ENCODE measurements at regions of chr1 and their contacts with region 1.

Region 1: DNA sequence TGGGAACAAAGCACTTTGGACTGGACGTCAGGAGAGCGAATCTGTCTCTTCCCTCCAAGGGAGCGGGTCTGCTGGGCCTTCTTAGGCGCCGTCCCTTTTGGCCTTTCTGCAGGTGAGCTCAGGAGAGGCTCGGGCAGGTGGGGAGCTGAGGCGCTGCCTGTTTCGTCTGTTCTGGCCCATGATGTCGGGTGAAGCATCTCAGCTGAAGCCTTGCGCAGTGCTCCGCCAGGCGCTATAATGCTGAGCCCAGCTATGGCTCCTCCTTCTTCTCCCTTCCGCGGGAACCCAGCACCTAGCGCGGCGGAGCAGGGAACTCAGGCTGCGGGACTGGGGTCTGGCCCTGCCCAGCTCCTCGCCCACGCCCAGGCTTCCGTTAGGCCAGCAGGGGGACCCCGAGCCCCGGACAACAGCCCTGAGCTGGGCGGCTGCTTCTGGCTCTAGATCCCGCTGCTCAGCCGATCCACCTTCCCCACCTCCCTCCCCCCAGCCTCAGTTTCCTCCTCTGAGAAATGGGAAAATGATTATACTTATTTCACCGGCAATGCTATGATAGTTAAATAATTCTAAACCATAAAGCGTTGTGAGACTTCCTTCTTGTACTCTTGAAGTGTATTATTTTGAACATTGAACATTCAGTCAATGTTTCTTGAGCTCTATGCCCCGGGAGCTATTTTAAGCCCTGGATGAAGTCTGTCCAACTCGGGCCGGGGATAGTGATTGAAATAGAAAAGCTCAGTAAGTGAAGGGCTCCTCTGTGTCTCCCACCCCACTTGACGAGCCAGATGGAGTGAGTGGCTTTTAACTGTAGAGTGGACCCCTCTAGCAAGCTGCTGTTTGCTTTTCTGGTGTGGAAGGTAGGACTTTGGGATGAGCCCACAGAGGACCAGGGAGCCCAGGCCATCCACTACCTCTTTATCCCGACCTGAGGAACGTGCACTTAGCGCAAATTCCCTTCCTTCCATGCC is 9.6 kb upstream of the ADORA1 start:
- DNase-seq: peak; percentile 76 to 93
- H3K4me3 ChIP-seq: peak overlapping the region in 3 of 4 experiments; percentile 25 to 43 (median 32); a peak in 4 of 8 replicates
- H3K27ac ChIP-seq: no peak overlapping the region
- H3K4me1 ChIP-seq: peaks cover 0 to 2% (median under 1%) of the 10 kb centered on the region in 4 experiments; a peak in 1 of 7 replicates
- H3K27me3 ChIP-seq: peaks cover 0 to 6% (median 3%) of the 10 kb centered on the region in 4 experiments; a peak in 4 of 7 replicates
- CTCF ChIP-seq: peak; percentile 83 to 97 (median 92)
- EP300 ChIP-seq: peak in 1 of 2 experiments; percentile 29; a peak in 1 of 3 replicates
- POLR2A ChIP-seq: no peak
- RAD21 ChIP-seq: peak; percentile 98

Region 2: DNA sequence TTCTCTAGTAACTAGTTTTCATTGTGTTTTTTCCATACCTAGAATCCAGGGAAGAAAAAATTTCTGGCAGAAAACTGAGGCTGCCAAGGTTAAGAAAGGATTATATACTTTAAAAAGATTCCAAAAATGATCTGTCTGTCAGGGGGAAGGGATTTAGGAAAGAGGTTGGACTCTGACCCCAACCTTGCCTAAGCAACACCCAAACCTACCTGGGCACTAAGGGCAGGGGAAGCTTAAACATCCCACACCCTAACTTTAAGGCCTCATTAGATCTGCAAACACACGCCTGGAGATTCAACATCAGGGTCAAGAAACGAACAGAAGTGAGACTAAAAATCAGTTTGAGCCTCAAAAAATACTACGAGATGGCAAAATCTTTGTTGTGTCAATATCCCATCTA is 329.1 kb before region 1 on chr1:
- CTCF ChIA-PET with region 1: no interaction called
- POLR2A ChIA-PET with region 1: no interaction called
- DNase-seq: no peak
- H3K4me3 ChIP-seq: no peak overlapping the region
- H3K27ac ChIP-seq: no peak overlapping the region
- H3K4me1 ChIP-seq: no peaks in the 10 kb centered on the region
- H3K27me3 ChIP-seq: no peaks in the 10 kb centered on the region
- CTCF ChIP-seq: no peak
- EP300 ChIP-seq: no peak
- POLR2A ChIP-seq: no peak
- RAD21 ChIP-seq: no peak

Region 3: GRCh38 chr1:202926720-202927491 is 191.0 kb before region 1 on chr1 and contains the start of gene KLHL12:
- CTCF ChIA-PET with region 1: no interaction called
- POLR2A ChIA-PET with region 1: no interaction called
- DNase-seq: peak; percentile 93 to 96
- H3K4me3 ChIP-seq: peak within 1 kb of the TSS; percentile 52 to 90 (median 87)
- H3K27ac ChIP-seq: peak within 1 kb of the TSS; percentile 90
- H3K4me1 ChIP-seq: no peaks in the 10 kb centered on the region
- H3K27me3 ChIP-seq: no peaks in the 10 kb centered on the region
- CTCF ChIP-seq: peak; percentile 69 to 78 (median 69)
- EP300 ChIP-seq: peak; percentile 44 to 59; a peak in 2 of 3 replicates
- POLR2A ChIP-seq: peak; percentile 82 to 94
- RAD21 ChIP-seq: peak; percentile 41 to 52
- total RNA-seq, gene KLHL12: 29.9 and 33.3 TPM in 2 replicates

Region 4: DNA sequence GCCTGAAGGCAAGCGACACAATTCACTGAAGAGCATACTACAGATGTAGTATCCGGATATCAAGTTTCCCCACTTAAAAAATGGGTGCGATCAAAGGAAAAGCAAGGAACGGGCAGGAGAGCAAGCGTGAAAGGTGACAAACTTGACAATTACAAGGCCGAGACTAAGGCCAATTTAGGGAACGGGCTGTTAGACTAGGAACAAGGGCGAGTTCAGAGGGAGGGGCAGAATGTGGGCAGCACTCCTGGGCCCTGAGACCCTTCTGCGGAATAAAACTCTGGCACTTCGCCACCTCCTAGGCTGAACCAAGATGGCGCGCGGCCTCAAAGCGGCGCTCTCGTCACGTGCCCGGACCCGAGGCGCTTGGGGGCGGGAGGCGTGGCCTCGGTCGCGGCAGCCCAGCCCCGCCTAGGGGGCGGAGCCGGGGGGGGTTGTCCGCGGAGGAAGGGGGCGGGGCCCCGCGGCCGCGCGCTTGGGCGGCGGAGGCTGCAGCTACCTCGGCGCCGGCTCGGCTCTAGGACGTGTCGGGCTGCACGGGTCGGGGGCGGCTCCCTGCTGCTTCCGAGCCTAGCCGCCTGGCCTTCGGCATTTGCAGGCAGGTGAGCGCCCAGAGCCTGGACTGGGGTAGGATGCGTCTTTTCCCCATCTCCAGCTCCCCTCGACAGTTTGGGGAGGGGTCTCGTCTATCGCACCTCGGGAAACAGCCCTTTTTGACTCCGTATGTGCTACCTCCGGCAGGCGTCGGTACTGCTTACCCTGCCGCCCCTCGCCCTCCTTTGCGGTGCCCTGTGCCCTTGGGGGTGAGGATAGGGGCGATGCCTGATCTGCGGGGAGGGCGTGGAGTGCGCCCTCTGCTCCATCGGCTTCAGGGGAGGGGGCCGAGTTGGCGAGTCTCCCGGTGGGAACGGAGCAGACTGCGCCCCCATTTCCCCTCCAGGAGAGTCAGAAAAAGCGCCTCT is 91.6 kb before region 1 on chr1 and contains the start of gene PPFIA4:
- CTCF ChIA-PET with region 1: interaction called, 1,071 read pairs
- POLR2A ChIA-PET with region 1: no interaction called
- DNase-seq: peak; percentile 73 to 97
- H3K4me3 ChIP-seq: peak within 1 kb of the TSS; percentile 51 to 88 (median 87)
- H3K27ac ChIP-seq: no peak within 1 kb of the TSS
- H3K4me1 ChIP-seq: peaks cover 4 to 13% (median 6%) of the 10 kb centered on the region in 4 experiments
- H3K27me3 ChIP-seq: peaks cover 7 to 26% (median 18%) of the 10 kb centered on the region in 4 experiments
- CTCF ChIP-seq: peak in 1 of 3 experiments; percentile 28; a peak in 1 of 4 replicates
- EP300 ChIP-seq: 0 out of 3 replicates have a peak, but pooled peaks of 1 of the 2 experiments have one; percentile 26
- POLR2A ChIP-seq: peak; percentile 74 to 79
- RAD21 ChIP-seq: peak in 1 of 2 experiments; percentile 11; a peak in 1 of 4 replicates
- total RNA-seq, gene PPFIA4: 7.0 and 9.9 TPM in 2 replicates

Region 5: DNA sequence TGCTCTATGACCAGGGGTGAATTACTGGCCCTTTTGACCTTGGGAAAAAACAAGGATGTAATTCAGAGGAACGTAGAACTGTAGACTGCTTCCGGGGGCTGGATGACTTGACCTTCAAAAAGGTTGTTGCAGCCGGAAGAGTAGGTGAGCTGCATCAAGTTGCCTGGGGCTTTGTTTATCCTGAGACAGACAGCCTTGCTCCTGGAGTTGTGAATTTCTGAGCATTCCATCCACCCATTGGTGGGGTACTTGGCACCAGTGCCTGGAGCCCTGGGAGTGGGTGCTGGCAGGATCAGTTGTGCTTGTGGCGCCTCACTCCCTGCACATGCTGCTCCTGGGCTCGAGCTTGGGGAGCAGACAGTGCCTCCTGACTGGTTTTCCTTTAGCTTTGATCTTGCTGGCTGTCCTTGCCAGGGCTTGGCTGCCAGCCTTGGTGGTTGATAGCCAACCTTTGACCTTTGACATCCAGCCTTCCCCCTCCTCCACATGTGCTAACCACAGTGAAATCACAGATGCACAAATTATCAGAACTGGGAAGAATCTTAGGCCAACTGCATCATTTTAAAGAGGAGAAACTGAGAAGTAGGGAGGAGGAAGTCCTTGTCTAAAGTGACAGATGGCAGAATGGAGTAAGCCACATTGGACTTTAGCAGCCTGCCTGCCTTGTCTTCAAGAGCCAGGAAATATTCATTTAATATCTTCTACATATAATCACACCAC is 15.8 kb before region 1 on chr1:
- CTCF ChIA-PET with region 1: interaction called, 20 read pairs
- POLR2A ChIA-PET with region 1: no interaction called
- DNase-seq: no peak
- H3K4me3 ChIP-seq: no peak overlapping the region
- H3K27ac ChIP-seq: no peak overlapping the region
- H3K4me1 ChIP-seq: no peaks in the 10 kb centered on the region
- H3K27me3 ChIP-seq: peaks cover 0 to 4% (median 0%) of the 10 kb centered on the region in 4 experiments; a peak in 1 of 7 replicates
- CTCF ChIP-seq: no peak
- EP300 ChIP-seq: no peak
- POLR2A ChIP-seq: no peak
- RAD21 ChIP-seq: no peak

Region 6: GRCh38 chr1:203133970-203134725 is 16.3 kb after region 1 on chr1:
- CTCF ChIA-PET with region 1: interaction called, 511 read pairs
- POLR2A ChIA-PET with region 1: interaction called, 3 read pairs
- DNase-seq: peak in 1 of 2 experiments; percentile 45
- H3K4me3 ChIP-seq: no peak overlapping the region
- H3K27ac ChIP-seq: no peak overlapping the region
- H3K4me1 ChIP-seq: peaks cover 0 to 12% (median 6%) of the 10 kb centered on the region in 4 experiments; a peak in 4 of 7 replicates
- H3K27me3 ChIP-seq: peaks cover 0 to 4% (median 1%) of the 10 kb centered on the region in 4 experiments; a peak in 3 of 7 replicates
- CTCF ChIP-seq: no peak
- EP300 ChIP-seq: no peak
- POLR2A ChIP-seq: no peak
- RAD21 ChIP-seq: no peak

Region 7: DNA sequence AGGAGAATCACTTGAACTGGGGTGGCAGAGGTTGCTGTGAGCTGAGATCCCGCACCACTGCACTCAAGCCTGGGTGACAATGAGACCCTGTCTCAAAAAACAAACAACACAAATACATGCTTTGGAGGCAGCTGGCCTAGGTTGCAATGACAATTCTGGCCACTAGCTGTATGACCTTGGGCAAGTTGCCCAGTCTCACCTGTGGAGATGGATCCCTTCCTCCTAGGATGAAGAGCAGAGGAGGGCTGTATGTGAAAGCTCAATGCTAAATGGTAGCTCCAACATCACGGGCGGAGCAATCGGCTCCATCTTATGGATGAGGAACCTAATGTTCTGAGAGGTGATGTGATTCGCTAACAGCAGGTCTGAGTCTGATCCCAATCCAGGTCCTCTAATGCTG is 30.2 kb after region 1 on chr1:
- CTCF ChIA-PET with region 1: interaction called, 511 read pairs
- POLR2A ChIA-PET with region 1: interaction called, 3 read pairs
- DNase-seq: no peak
- H3K4me3 ChIP-seq: no peak overlapping the region
- H3K27ac ChIP-seq: no peak overlapping the region
- H3K4me1 ChIP-seq: peaks cover 7 to 43% (median 19%) of the 10 kb centered on the region in 4 experiments
- H3K27me3 ChIP-seq: no peaks in the 10 kb centered on the region
- CTCF ChIP-seq: peak; percentile 35 to 63 (median 52); a peak in 3 of 4 replicates
- EP300 ChIP-seq: no peak
- POLR2A ChIP-seq: no peak
- RAD21 ChIP-seq: no peak; a peak in 1 of 4 replicates

Region 8: GRCh38 chr1:203177470-203178039 is 59.7 kb after region 1 on chr1:
- CTCF ChIA-PET with region 1: interaction called, 511 read pairs
- POLR2A ChIA-PET with region 1: interaction called, 3 read pairs
- DNase-seq: no peak
- H3K4me3 ChIP-seq: no peak overlapping the region
- H3K27ac ChIP-seq: no peak overlapping the region
- H3K4me1 ChIP-seq: peaks cover 0 to 7% (median 3%) of the 10 kb centered on the region in 4 experiments; a peak in 4 of 7 replicates
- H3K27me3 ChIP-seq: no peaks in the 10 kb centered on the region
- CTCF ChIP-seq: no peak
- EP300 ChIP-seq: no peak
- POLR2A ChIP-seq: no peak
- RAD21 ChIP-seq: no peak

Region 9: GRCh38 chr1:203202431-203203245 is 84.7 kb after region 1 on chr1:
- CTCF ChIA-PET with region 1: interaction called, 39 read pairs
- POLR2A ChIA-PET with region 1: no interaction called
- DNase-seq: no peak
- H3K4me3 ChIP-seq: no peak overlapping the region
- H3K27ac ChIP-seq: no peak overlapping the region
- H3K4me1 ChIP-seq: peaks cover 0 to 7% (median 0%) of the 10 kb centered on the region in 4 experiments; a peak in 2 of 7 replicates
- H3K27me3 ChIP-seq: no peaks in the 10 kb centered on the region; a peak in 1 of 7 replicates
- CTCF ChIP-seq: no peak
- EP300 ChIP-seq: no peak
- POLR2A ChIP-seq: no peak
- RAD21 ChIP-seq: no peak

Region 10: GRCh38 chr1:203286161-203286984 is 168.5 kb after region 1 on chr1:
- CTCF ChIA-PET with region 1: no interaction called
- POLR2A ChIA-PET with region 1: no interaction called
- DNase-seq: no peak
- H3K4me3 ChIP-seq: no peak overlapping the region
- H3K27ac ChIP-seq: no peak overlapping the region
- H3K4me1 ChIP-seq: peaks cover 15 to 32% (median 21%) of the 10 kb centered on the region in 4 experiments
- H3K27me3 ChIP-seq: peaks cover 0 to 12% (median 10%) of the 10 kb centered on the region in 4 experiments; a peak in 4 of 7 replicates
- CTCF ChIP-seq: peak in 1 of 3 experiments; percentile 2; a peak in 1 of 4 replicates
- EP300 ChIP-seq: no peak
- POLR2A ChIP-seq: no peak
- RAD21 ChIP-seq: 0 out of 4 replicates have a peak, but pooled peaks of 1 of the 2 experiments have one; percentile 7

Region 11: GRCh38 chr1:203402629-203403337 is 284.9 kb after region 1 on chr1:
- CTCF ChIA-PET with region 1: no interaction called
- POLR2A ChIA-PET with region 1: no interaction called
- DNase-seq: no peak
- H3K4me3 ChIP-seq: no peak overlapping the region
- H3K27ac ChIP-seq: no peak overlapping the region
- H3K4me1 ChIP-seq: peaks cover 0 to 2% (median 0%) of the 10 kb centered on the region in 4 experiments; a peak in 2 of 7 replicates
- H3K27me3 ChIP-seq: no peaks in the 10 kb centered on the region
- CTCF ChIP-seq: no peak
- EP300 ChIP-seq: no peak
- POLR2A ChIP-seq: no peak
- RAD21 ChIP-seq: no peak

Measured in H1 (cell line).